ENCODE measurements at regions of chr20 and their contacts with region 1.

Region 1: DNA sequence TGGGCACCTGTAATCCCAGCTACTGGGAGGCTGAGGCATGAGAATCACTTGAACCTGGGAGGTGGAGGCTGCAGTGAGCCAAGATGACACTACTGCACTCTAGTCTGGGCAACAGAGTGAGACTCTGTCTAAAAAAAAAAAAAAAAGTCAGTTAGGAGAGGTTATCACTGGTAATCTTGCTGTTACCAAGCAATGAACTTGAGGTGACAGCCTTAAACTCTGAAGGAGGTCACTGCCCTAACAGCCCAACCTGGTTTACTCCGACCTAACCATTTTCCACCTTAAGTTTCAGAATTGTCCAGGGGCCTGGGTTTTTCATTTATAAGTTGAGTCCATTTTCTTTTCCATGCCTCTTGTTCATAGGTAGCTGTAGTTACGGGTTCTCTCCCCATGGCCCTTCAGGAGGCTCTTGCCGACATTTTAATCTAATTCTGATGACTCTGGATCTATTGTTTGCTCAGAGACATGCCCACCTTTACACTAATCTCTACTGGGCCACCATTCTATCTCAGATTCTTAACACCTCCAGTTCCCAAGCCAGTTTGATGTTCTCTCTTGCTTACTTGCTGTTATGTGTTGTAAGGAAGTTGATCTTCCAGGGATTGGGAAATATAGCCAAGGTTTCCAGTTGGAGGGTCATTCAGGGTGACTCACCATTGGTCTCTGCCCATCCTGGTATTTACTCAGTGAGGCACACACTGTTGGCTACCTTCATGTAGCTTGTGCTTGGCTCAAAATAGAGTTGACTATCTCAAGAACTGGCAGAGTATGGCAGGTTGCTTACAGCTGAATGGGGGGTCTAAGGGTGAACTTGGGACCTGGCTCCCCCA is 29.1 kb downstream of the SHLD1 start:
- DNase-seq: peak in 1 of 6 donors; percentile 52
- ATAC-seq: peak; percentile 41 to 82 (median 70)
- H3K4me3 ChIP-seq: no peak overlapping the region
- H3K27ac ChIP-seq: no peak overlapping the region
- H3K4me1 ChIP-seq: peaks cover 15 to 31% (median 24%) of the 10 kb centered on the region in 3 donors
- H3K27me3 ChIP-seq: no peaks in the 10 kb centered on the region
- CTCF ChIP-seq: no peak

Region 2: GRCh38 chr20:5596401-5597193 is 182.7 kb before region 1 on chr20:
- intact Hi-C with region 1: loop called in 1 of 3 experiments (anchors 10 kb)
- DNase-seq: no peak
- ATAC-seq: no peak
- H3K4me3 ChIP-seq: no peak overlapping the region
- H3K27ac ChIP-seq: no peak overlapping the region
- H3K4me1 ChIP-seq: no peaks in the 10 kb centered on the region
- H3K27me3 ChIP-seq: no peaks in the 10 kb centered on the region
- CTCF ChIP-seq: no peak

Region 3: GRCh38 chr20:5627463-5628050 is 151.7 kb before region 1 on chr20:
- intact Hi-C with region 1: no loop called
- DNase-seq: no peak
- ATAC-seq: no peak
- H3K4me3 ChIP-seq: no peak overlapping the region
- H3K27ac ChIP-seq: no peak overlapping the region
- H3K4me1 ChIP-seq: no peaks in the 10 kb centered on the region
- H3K27me3 ChIP-seq: no peaks in the 10 kb centered on the region
- CTCF ChIP-seq: no peak

Measured in pancreas (tissue), 10 donors.